ENCODE measurements at regions of chr12 and their contacts with region 1.

Region 1: GRCh38 chr12:49515266-49515665 is 23.6 kb upstream of the KCNH3 start:
- DNase-seq: no peak
- ATAC-seq: no peak
- H3K4me3 Mint-ChIP-seq: no peak overlapping the region
- H3K27ac Mint-ChIP-seq: no peak overlapping the region
- H3K4me1 Mint-ChIP-seq: peaks cover 3% of the 10 kb centered on the region
- H3K27me3 Mint-ChIP-seq: no peaks in the 10 kb centered on the region

Region 2: DNA sequence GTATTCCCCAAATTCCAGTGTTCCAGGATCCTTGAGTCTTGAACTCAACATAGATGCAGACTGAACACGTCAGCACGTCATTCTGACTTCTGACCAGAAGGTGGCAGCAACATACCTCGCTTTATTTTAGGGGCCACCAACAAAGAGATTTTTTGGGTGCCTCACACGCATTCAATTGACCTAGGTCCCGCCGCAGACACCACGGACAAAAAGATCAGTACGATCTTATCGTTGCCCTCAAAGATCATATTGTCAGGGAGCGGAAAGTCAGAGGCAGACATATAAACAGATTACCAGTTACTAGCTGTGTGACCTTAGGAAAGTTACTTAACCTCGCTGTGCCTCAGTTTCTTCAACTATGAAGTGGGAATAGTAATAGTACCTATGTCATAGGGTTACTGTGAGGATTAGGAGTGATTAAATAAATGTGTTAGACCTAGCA is 226.8 kb before region 1 on chr12:
- CTCF ChIA-PET with region 1: interaction called, 20 read pairs
- DNase-seq: peak; percentile 84
- ATAC-seq: peak; percentile 70
- H3K4me3 Mint-ChIP-seq: no peak overlapping the region
- H3K27ac Mint-ChIP-seq: no peak overlapping the region
- H3K4me1 Mint-ChIP-seq: peaks cover 3% of the 10 kb centered on the region
- H3K27me3 Mint-ChIP-seq: peaks cover 41% of the 10 kb centered on the region

Region 3: GRCh38 chr12:49314811-49315210 is 200.5 kb before region 1 on chr12:
- CTCF ChIA-PET with region 1: no interaction called
- DNase-seq: no peak
- ATAC-seq: no peak
- H3K4me3 Mint-ChIP-seq: no peak overlapping the region
- H3K27ac Mint-ChIP-seq: no peak overlapping the region
- H3K4me1 Mint-ChIP-seq: no peaks in the 10 kb centered on the region
- H3K27me3 Mint-ChIP-seq: peaks cover 22% of the 10 kb centered on the region

Region 4: DNA sequence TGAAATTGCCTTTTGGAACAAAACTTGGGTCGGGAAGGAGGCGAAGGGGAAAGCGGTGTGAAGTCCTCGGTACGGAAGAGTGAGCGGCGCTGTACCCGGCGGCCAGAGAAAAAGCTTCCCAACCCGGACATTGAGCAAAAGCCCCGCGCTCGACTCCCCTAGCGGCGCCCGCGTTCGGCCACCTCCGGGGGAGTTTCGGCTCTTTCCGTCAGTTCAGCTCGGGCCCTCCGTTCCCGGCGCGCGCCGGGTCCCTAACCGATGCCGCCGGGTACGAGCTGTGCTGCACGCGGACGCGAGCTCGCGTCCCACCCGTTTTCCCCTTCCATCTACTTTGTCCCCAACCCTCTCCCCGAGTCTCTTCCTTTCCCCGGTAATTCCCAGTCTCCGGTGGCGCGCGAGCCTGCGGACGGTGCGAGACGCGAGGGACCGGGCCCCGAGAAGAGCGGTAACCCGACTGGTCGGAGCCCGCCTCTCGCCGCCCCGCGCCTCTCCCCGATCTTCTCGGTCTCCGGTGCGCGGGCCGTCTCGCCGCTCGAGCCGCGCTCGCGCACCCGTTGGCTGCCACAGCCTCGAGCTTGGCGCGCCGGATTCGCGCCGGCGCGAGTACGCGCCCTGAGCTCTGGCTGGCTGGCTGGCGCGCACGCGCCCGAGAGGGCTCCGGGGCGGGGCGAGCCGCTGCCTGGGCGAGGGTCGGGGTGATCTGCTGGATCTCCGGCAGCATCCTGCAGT is 148.4 kb before region 1 on chr12:
- CTCF ChIA-PET with region 1: interaction called, 260 read pairs
- DNase-seq: peak; percentile 94
- ATAC-seq: peak; percentile 88
- H3K4me3 Mint-ChIP-seq: peak overlapping the region; percentile 95
- H3K27ac Mint-ChIP-seq: peak overlapping the region; percentile 98
- H3K4me1 Mint-ChIP-seq: peaks cover 35% of the 10 kb centered on the region
- H3K27me3 Mint-ChIP-seq: no peaks in the 10 kb centered on the region

Region 5: GRCh38 chr12:49503674-49504180 is 11.5 kb before region 1 on chr12:
- CTCF ChIA-PET with region 1: interaction called, 22 read pairs
- DNase-seq: no peak
- ATAC-seq: no peak
- H3K4me3 Mint-ChIP-seq: no peak overlapping the region
- H3K27ac Mint-ChIP-seq: no peak overlapping the region
- H3K4me1 Mint-ChIP-seq: peaks cover 2% of the 10 kb centered on the region
- H3K27me3 Mint-ChIP-seq: no peaks in the 10 kb centered on the region

Region 6: DNA sequence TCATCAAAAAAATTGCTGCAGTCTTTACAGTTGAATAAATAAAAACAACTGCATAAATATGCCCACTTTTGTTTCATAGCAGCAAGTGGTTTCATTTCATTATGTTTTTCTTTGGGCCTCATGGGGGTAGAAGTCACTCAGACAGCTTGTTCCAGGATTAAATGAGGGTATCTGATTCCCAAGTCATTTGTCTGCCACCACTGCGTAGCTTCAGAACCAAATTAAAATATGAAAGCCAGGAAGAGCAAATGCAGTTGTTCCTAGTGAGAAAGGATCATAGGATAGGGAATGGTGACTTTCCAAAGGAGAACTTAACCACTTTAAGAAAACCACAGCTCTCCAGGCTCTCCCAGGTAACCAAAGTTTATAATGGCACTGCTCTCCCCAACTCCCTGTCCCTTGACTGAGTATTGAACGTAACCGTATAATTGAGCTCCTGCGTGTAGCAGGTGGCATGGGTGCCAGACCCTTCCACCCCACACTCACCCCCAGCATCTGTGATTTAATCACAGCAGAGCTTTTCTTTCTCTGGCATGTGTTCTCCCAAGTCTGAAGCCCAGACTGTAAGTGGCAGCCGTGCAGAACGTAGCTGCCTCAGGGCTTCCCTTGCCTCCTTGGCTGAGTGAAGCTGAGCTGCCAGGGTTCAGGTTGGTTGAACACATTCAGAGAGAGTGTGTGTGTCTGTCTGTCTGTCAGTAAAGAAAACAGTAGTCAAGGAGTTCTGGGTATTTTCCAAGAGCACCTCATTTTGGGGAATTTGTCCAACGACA is 12.3 kb after region 1 on chr12:
- CTCF ChIA-PET with region 1: interaction called, 15 read pairs
- DNase-seq: peak; percentile 34
- ATAC-seq: no peak
- H3K4me3 Mint-ChIP-seq: no peak overlapping the region
- H3K27ac Mint-ChIP-seq: no peak overlapping the region
- H3K4me1 Mint-ChIP-seq: peaks cover 3% of the 10 kb centered on the region
- H3K27me3 Mint-ChIP-seq: no peaks in the 10 kb centered on the region

Measured in activated CD8-positive, alpha-beta memory T cell treated with anti-CD3 and anti-CD28 coated beads, Interleukin-2, amount 10 ng/mL, durations not matched to agents 7 days and 5 days (primary cell).